CD8-positive, alpha-beta T cell (primary cell): ENCODE measurements at regions of chr3 and their contacts with region 1.

Region 1: DNA sequence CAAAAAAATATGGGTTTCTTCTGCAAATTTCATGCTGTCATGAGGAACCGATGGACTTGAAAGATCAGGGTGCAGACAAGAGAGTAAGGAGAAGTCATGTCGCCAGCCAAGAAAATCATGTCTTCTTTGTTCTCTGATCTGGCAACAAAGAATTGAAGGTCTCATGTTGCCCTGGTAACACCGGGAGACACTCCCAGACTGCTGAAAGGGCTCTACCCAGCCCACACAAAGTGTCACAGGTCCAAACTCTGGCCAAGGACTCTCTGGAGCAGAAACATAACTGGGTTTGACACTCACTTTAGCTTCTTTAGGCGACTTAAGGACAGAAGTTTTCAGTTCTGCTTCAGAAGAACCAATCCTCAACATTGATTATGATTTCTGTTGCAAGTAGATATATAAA is 42.9 kb downstream of the SIDT1 start:
- DNase-seq: no peak
- ATAC-seq: no peak
- H3K4me3 ChIP-seq: no peak overlapping the region
- H3K4me3 Mint-ChIP-seq: no peak overlapping the region
- H3K27ac ChIP-seq: no peak overlapping the region
- H3K27ac Mint-ChIP-seq: peak overlapping the region; percentile 61
- H3K4me1 ChIP-seq: no peaks in the 10 kb centered on the region
- H3K4me1 Mint-ChIP-seq: peaks cover 2% of the 10 kb centered on the region
- H3K27me3 ChIP-seq: no peaks in the 10 kb centered on the region
- H3K27me3 Mint-ChIP-seq: no peaks in the 10 kb centered on the region
- CTCF ChIP-seq: no peak

Region 2: DNA sequence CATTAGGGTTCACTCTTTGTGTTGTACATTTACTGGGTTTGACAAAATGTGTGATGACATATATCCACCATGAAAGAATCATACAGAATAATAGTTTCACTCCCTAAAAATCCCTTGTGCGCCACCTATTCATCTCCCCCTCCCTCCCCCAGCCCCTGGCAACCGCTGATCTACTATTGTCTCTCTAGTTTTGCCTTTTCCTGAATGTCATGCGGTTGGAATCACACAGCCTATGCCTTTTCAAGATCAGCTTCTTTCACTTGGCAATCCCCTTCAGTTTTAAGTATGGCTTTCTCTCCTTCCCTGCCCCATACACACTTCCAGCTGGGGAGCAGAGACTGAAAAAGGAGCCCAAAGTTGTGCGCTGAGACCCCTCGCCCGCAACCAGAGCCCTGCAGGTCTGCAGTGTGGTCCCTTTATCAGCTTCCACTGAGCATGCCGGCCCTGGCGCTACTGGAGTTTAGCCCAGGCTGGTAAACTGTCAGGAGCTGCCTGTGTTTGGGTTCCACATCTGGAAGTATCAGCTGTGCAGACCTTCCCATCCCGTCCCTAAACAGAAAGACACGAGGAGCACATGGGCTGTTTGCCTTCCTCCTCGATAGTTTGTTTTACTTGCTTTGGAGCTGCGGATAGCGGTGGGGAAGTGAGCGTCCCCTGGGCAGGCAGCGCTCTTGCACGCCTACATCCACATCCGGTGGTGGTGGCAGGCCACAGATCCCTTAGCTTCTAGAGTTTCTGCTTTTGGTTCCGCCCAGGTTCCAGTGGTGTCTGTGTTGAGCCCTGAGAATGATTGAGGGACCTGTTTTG is 351.5 kb before region 1 on chr3:
- CTCF ChIA-PET with region 1: no interaction called
- POLR2A ChIA-PET with region 1: no interaction called
- intact Hi-C with region 1: no loop called
- DNase-seq: peak in 2 of 9 experiments; percentile 3 to 17
- ATAC-seq: no peak
- H3K4me3 ChIP-seq: no peak overlapping the region
- H3K4me3 Mint-ChIP-seq: no peak overlapping the region
- H3K27ac ChIP-seq: no peak overlapping the region
- H3K27ac Mint-ChIP-seq: no peak overlapping the region
- H3K4me1 ChIP-seq: peaks cover 5% of the 10 kb centered on the region
- H3K4me1 Mint-ChIP-seq: peaks cover 14% of the 10 kb centered on the region
- H3K27me3 ChIP-seq: no peaks in the 10 kb centered on the region
- H3K27me3 Mint-ChIP-seq: peaks cover 11% of the 10 kb centered on the region
- CTCF ChIP-seq: no peak

Region 3: GRCh38 chr3:113468539-113468938 is 106.7 kb before region 1 on chr3:
- CTCF ChIA-PET with region 1: interaction called, 10 read pairs
- POLR2A ChIA-PET with region 1: no interaction called
- intact Hi-C with region 1: no loop called
- DNase-seq: no peak
- ATAC-seq: no peak
- H3K4me3 ChIP-seq: no peak overlapping the region
- H3K4me3 Mint-ChIP-seq: no peak overlapping the region
- H3K27ac ChIP-seq: no peak overlapping the region
- H3K27ac Mint-ChIP-seq: no peak overlapping the region
- H3K4me1 ChIP-seq: no peaks in the 10 kb centered on the region
- H3K4me1 Mint-ChIP-seq: no peaks in the 10 kb centered on the region
- H3K27me3 ChIP-seq: no peaks in the 10 kb centered on the region
- H3K27me3 Mint-ChIP-seq: no peaks in the 10 kb centered on the region
- CTCF ChIP-seq: no peak

Region 4: GRCh38 chr3:113495035-113495434 is 80.2 kb before region 1 on chr3:
- CTCF ChIA-PET with region 1: interaction called, 107 read pairs
- POLR2A ChIA-PET with region 1: interaction called, 3 read pairs
- intact Hi-C with region 1: loop called (anchors 1 kb)
- DNase-seq: peak in 6 of 9 experiments; percentile 38 to 67 (median 54)
- ATAC-seq: no peak
- H3K4me3 ChIP-seq: no peak overlapping the region
- H3K4me3 Mint-ChIP-seq: no peak overlapping the region
- H3K27ac ChIP-seq: no peak overlapping the region
- H3K27ac Mint-ChIP-seq: no peak overlapping the region
- H3K4me1 ChIP-seq: no peaks in the 10 kb centered on the region
- H3K4me1 Mint-ChIP-seq: no peaks in the 10 kb centered on the region
- H3K27me3 ChIP-seq: no peaks in the 10 kb centered on the region
- H3K27me3 Mint-ChIP-seq: no peaks in the 10 kb centered on the region
- CTCF ChIP-seq: peak; percentile 54

Region 5: DNA sequence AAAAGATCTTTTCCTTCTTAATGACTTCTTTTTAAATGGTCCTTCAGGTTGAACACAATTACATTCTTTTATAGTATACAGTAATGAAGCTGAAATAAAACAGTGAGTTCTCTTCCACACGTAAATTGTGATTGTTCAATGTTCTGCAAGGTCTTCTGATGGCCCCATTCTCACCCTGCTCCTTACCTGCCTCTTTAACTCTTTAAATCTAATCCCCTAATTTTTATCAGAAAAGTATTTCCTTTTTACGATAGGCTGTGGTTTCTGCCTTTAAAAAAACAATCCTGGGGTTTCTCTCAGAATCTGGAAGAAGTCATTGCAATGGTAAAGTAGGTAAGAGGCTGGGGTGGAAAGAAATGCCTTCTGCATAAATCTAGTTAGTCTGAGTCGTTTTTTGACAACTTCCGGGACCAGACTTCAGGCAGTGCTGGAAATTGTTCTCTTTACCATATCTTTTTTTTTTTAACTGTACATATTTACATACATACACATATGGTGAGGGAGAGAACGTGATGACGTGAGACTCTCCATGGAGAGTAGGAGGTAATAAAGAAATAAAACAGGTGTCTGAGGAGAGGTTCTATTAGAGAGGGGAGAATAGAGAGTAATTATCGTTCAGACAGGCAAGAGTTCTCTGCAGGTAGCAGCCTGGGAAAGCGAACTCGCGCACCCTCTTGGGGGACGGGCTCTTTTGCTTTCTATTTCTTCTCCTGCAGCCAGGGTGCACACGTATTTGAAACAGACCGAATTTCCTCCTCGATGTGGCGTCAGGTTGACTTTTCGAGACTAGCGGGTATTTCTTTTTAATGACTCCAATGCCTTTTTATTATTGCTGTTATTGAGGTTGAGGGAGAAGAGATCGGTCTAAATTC is 43.1 kb before region 1 on chr3 and contains the start of gene SIDT1:
- CTCF ChIA-PET with region 1: interaction called, 6 read pairs
- POLR2A ChIA-PET with region 1: no interaction called
- intact Hi-C with region 1: loop called in 1 of 2 experiments (anchors 2 kb)
- DNase-seq: peak; percentile 50 to 90 (median 73)
- ATAC-seq: peak; percentile 77
- H3K4me3 ChIP-seq: peak within 1 kb of the TSS; percentile 83 to 93
- H3K4me3 Mint-ChIP-seq: peak within 1 kb of the TSS; percentile 96
- H3K27ac ChIP-seq: peak within 1 kb of the TSS; percentile 87 to 93
- H3K27ac Mint-ChIP-seq: peak within 1 kb of the TSS; percentile 97
- H3K4me1 ChIP-seq: peaks cover 43% of the 10 kb centered on the region
- H3K4me1 Mint-ChIP-seq: peaks cover 52% of the 10 kb centered on the region
- H3K27me3 ChIP-seq: no peaks in the 10 kb centered on the region
- H3K27me3 Mint-ChIP-seq: no peaks in the 10 kb centered on the region
- CTCF ChIP-seq: no peak
- total RNA-seq, gene SIDT1: 32.1 to 38.3 TPM

Region 6: DNA sequence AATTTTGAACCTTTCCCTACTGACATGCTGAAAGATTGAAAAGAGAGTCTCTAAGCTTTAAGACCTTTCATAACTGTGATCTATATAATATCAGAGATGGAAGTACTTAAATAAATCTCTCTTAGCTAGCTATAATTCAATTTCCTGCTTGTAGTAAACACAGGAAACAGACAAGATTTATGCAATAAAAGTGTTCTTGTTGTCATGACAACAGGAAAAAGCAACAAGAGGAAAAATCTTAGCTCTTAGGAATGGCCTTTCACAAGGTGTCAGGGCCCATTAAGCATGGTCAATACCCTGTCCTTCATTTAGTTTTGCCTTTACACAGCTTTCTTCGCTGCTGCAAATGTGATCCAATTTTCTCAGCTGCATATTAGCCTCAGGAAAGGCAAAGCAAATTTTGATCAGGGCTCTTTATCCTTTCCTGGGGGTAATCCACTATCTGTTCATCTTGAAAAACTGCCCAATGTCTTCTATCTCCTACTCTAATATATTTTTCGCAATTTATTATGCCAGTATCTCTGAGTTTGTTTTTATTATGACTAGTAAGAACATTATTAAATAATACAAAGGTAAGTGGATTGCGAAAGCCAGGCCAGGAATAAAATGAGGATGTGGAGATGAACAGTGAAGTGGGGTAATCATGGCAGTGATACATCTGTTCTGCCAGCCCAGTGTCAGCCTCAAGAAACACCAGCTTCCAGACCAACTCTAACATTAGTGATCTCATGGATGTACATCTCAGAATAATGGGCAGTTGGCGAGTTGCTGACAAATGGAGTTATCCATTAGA is 14.2 kb before region 1 on chr3:
- CTCF ChIA-PET with region 1: interaction called, 37 read pairs
- POLR2A ChIA-PET with region 1: no interaction called
- intact Hi-C with region 1: loop called in 1 of 2 experiments (anchors 2 kb)
- DNase-seq: peak in 2 of 9 experiments; percentile 31 to 64
- ATAC-seq: no peak
- H3K4me3 ChIP-seq: no peak overlapping the region
- H3K4me3 Mint-ChIP-seq: no peak overlapping the region
- H3K27ac ChIP-seq: peak overlapping the region in 1 of 2 experiments; percentile 31
- H3K27ac Mint-ChIP-seq: peak overlapping the region; percentile 58
- H3K4me1 ChIP-seq: peaks cover 23% of the 10 kb centered on the region
- H3K4me1 Mint-ChIP-seq: peaks cover 66% of the 10 kb centered on the region
- H3K27me3 ChIP-seq: no peaks in the 10 kb centered on the region
- H3K27me3 Mint-ChIP-seq: no peaks in the 10 kb centered on the region
- CTCF ChIP-seq: no peak